Activated T-helper 2 cell treated with anti-CD3 and anti-CD28 coated beads, Interferon-gamma antibody, Interleukin-2, Interleukin-4, amounts not matched to agents 10 μg/mL and 5 μg/mL and 100 μg/mL, durations not matched to agents 14 hours and 24 hours and 36 hours (primary cell): ENCODE measurements at regions of chr12 and their contacts with region 1.

Region 1: GRCh38 chr12:57836442-57837375 is 9.8 kb downstream of the CTDSP2 start:
- DNase-seq: peak; percentile 32
- H3K4me3 Mint-ChIP-seq: peak overlapping the region; percentile 26
- H3K27ac Mint-ChIP-seq: peak overlapping the region; percentile 77
- H3K4me1 Mint-ChIP-seq: peaks cover 67% of the 10 kb centered on the region
- H3K27me3 Mint-ChIP-seq: no peaks in the 10 kb centered on the region

Region 2: DNA sequence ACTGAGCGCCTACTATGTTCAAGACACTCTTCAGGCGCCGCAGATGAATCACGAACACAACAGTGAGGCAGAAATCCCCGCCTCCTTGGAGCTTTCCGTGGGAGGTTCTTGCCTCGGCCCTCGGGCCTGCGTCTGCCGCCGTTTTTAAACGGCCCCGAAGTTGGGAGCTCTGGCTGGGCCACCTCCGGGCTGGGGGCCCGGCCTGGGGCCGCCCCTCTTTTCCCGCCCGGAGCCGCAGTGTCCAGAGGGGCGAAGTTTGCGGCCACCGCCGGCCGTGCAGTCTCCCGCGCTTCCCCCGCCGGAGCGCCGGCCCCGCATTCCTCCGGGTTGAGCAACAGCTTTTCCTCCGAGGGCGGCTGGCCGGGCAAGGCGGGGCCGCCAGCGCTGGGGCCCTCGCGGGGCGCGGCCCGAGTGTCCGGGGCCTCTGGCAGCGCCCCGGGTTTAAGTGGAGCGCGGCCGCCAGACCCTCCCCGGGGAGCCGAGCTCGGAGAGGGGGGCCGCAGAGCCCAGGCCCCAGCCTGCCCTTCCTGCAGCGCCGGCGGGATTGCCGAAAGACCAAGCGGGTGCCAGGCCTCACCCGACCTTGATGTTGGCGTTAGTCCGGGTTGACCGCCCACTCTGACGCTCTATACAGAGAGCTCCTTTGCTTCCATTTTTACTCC is 28.5 kb after region 1 on chr12:
- intact Hi-C with region 1: loop called (anchors 5 kb)
- DNase-seq: no peak
- H3K4me3 Mint-ChIP-seq: peak overlapping the region; percentile 76
- H3K27ac Mint-ChIP-seq: peak overlapping the region; percentile 65
- H3K4me1 Mint-ChIP-seq: peaks cover 8% of the 10 kb centered on the region
- H3K27me3 Mint-ChIP-seq: peaks cover 13% of the 10 kb centered on the region

Region 3: DNA sequence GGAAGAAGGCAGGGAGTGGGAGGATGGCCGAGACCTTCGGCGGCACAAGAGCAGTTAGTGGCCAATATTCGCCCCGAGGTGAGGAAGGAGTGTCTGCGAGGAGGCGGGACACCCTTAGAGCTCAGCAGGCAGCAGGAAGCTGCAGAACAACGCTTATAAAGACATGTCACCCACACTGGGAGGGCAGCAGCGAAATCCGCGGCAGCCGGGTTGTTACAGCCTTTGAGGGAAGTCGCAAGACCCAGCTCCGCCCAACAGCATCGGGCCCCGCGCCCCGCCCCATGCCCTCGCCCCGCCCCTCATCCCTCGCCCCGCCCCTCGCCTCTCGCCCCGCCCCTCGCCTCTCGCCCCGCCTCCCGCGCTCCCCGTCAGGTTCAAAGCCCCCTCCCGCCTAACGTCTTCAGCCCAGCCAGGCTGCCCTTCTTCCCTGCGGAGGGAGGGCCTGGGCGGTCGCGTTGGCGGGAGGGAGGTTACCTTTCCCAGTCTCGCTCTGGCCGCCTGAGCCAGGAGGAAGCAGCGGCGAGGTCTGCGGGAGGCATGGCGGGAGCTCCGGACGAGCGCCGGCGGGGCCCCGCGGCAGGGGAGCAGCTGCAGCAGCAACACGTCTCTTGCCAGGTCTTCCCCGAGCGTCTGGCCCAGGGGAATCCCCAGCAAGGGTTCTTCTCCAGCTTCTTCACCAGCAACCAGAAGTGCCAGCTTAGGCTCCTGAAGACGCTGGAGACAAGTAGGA is 104.6 kb after region 1 on chr12 and contains the start of gene ATP23:
- intact Hi-C with region 1: loop called (anchors 1 kb)
- DNase-seq: peak; percentile 90
- H3K4me3 Mint-ChIP-seq: peak within 1 kb of the TSS; percentile 89
- H3K27ac Mint-ChIP-seq: peak within 1 kb of the TSS; percentile 97
- H3K4me1 Mint-ChIP-seq: peaks cover 40% of the 10 kb centered on the region
- H3K27me3 Mint-ChIP-seq: no peaks in the 10 kb centered on the region
- total RNA-seq, gene ATP23: 10.8 and 12.7 TPM in 2 replicates